K562 (cell line): ENCODE measurements at regions of chr9 and their contacts with region 1.

Region 1: GRCh38 chr9:96607971-96608370 is 11.7 kb downstream of the CDC14B start:
- DNase-seq: no peak
- ATAC-seq: no peak
- H3K4me3 ChIP-seq: no peak overlapping the region
- H3K27ac ChIP-seq: no peak overlapping the region
- H3K4me1 ChIP-seq: no peaks in the 10 kb centered on the region
- H3K27me3 ChIP-seq: peaks cover 14 to 15% of the 10 kb centered on the region in 2 experiments; a peak in 4 of 5 replicates
- CTCF ChIP-seq: no peak
- EP300 ChIP-seq: no peak
- POLR2A ChIP-seq: no peak
- RAD21 ChIP-seq: no peak

Region 2: DNA sequence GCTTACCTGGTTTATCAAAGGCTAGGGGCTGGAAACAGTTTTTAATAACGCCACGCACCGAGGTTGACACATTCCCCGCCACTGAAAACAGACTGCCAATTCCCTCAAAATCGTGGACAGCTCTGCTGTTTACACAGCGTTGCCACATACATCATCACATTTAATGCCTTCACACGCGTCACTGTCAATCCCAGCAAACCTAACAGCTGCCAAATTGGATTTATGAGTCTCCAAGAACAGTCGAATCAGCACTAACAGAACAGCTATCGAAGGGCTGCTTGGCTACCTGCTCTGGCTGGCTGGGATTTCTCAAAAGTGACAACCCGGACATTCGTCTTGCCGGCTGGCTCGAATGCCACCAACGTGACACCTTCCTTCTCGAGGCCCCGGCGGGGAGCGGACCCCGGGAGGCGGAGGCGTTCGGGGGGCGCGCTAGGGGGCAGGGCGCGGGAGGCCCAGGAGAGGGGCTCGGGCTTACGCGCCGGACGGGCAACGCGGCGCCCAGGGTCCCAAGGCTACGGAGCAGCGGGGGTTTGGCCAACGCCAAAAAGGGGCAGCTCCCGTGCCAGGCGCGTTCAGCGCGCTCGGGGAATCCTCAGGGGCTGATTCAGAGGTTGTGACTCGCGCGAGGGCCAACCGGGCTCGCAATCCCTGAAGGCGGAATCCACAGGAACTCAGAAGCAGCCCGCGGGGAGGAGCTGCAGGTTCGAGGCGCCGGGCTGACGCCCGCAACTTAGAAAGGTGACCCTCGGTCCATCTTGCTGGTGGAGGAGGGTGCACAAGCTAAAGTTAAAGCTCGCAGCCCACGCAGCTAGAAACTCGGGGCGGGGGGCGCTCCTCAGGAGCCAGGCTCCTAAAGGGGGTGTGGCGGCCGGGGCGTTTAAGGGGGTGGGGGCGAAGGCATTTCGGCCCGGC is 10.5 kb after region 1 on chr9:
- CTCF ChIA-PET with region 1: no interaction called
- POLR2A ChIA-PET with region 1: interaction called, 15 read pairs
- in situ Hi-C with region 1: no loop called
- intact Hi-C with region 1: no loop called
- DNase-seq: peak in 2 of 4 experiments; percentile 36 to 52
- ATAC-seq: no peak
- H3K4me3 ChIP-seq: peak overlapping the region; percentile 51
- H3K27ac ChIP-seq: no peak overlapping the region
- H3K4me1 ChIP-seq: peaks cover 0 to 18% of the 10 kb centered on the region in 2 experiments; a peak in 3 of 5 replicates
- H3K27me3 ChIP-seq: peaks cover 0 to 3% of the 10 kb centered on the region in 2 experiments; a peak in 1 of 5 replicates
- CTCF ChIP-seq: no peak
- EP300 ChIP-seq: no peak
- POLR2A ChIP-seq: no peak
- RAD21 ChIP-seq: no peak